ENCODE measurements at regions of chr12 and their contacts with region 1.

Region 1: DNA sequence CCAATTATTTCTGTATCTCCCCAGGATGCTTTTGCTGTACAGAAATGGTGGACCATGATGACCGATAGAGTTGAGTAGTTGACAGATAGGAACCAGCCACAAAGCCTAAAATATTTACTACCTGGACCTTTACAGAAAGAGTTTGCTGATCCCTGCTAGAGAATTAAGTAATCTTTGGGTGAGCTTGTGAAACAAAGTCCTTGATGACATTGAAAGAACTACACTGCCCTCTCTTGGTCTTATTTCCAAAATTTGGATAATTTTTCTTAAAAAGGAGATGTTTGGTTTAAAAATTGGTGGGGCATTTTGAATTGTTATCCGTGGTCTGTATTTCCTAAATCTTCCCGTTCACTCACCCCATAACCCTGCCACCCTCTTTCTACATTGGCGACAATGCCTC is 13.7 kb upstream of the TCTN1 start:
- DNase-seq: no peak
- H3K4me3 Mint-ChIP-seq: no peak overlapping the region
- H3K27ac Mint-ChIP-seq: no peak overlapping the region
- H3K4me1 Mint-ChIP-seq: peaks cover 13% of the 10 kb centered on the region
- H3K27me3 Mint-ChIP-seq: no peaks in the 10 kb centered on the region

Region 2: GRCh38 chr12:110367181-110367864 is 232.9 kb before region 1 on chr12:
- CTCF ChIA-PET with region 1: no interaction called
- POLR2A ChIA-PET with region 1: no interaction called
- DNase-seq: no peak
- H3K4me3 Mint-ChIP-seq: no peak overlapping the region
- H3K27ac Mint-ChIP-seq: no peak overlapping the region
- H3K4me1 Mint-ChIP-seq: no peaks in the 10 kb centered on the region
- H3K27me3 Mint-ChIP-seq: no peaks in the 10 kb centered on the region

Region 3: DNA sequence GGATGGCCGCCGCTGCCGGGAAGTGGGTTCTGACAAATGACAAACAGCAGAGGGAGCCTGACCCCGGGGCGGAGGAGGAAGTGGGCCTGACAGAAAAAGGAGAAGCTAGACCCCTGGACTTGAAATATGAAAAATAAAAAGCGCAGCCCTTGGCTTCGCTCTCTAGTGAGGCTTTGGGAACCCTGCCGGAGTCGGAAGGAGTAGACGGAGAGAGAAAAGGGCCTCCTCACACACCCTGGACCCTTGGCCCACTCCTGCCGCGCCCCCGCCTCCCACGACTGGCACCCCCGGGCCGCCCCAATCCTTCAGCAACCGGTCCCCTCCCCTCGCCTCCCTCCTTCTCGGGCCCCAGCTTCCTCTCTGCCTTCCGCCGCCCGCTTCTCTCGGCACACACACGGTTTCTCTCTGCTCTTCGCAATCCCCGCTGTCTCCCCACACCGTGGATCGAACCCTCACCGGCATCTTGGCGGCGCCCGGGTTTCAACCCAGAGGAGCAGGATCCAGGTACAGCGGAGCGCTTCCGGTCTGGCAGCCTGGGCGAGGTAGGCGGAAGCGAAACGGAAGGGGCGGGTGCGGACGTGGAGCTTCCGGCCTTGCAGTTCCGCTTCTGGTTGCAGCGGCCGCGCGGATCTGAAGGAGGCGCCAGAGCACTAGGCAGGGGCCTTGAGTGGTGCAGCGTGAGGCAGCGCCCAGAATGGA is 150.3 kb before region 1 on chr12 and contains the start of gene ARPC3:
- CTCF ChIA-PET with region 1: interaction called, 79 read pairs
- POLR2A ChIA-PET with region 1: interaction called, 44 read pairs
- DNase-seq: peak; percentile 97
- H3K4me3 Mint-ChIP-seq: peak within 1 kb of the TSS; percentile 99
- H3K27ac Mint-ChIP-seq: peak within 1 kb of the TSS; percentile 100
- H3K4me1 Mint-ChIP-seq: peaks cover 46% of the 10 kb centered on the region
- H3K27me3 Mint-ChIP-seq: no peaks in the 10 kb centered on the region
- total RNA-seq, gene ARPC3: 460 to 466 TPM

Region 4: DNA sequence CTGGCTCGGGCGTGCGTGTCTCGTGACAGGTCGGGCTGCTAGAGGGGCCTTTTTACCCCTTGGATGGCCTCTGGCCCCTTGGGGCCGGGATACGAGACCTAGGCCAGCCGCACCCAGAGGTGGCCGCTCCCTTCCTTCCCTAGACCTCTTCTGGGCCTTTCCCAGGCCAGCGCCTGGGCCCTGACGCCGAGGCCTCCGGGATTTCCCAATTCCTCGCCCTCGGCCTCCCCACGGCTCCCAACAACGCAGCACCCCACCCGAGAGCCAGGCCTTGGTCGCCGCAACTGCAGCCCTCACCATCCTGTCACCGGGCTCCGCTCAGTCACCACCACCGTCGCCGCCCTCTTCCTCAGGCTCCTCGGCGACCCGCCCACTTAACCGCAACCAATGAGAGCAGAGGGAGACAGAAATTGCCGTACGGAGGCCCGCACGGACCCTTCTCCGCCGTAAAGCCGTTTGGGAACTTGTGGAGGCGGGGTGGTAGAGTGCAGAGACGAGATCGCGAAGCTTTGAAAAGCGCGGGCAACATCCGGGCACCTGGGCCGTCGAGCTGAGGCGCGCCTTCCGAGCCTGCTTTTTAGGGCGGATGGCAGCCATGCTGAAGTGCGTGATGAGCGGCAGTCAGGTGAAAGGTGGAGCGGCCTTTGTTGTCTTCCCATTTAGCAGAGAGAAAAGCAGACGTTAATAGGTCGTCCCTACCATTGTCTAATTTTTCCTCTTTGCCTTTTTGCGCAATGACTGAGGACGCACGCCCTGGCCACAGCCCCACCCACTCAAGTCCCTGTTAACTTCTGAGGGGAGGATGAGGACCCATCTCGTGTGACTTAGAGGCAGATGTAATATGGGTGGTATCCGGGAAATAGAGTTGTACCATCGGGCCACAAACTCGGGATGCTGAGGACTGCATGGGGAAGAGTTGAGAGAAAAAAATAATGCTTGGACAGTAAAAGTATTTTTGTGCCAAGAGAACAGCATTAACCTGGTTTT is 98.2 kb before region 1 on chr12 and contains the starts of genes RAD9B and VPS29:
- CTCF ChIA-PET with region 1: interaction called, 51 read pairs
- POLR2A ChIA-PET with region 1: interaction called, 16 read pairs
- DNase-seq: peak; percentile 100
- H3K4me3 Mint-ChIP-seq: peak within 1 kb of the TSS; percentile 94
- H3K27ac Mint-ChIP-seq: peak within 1 kb of the TSS; percentile 93
- H3K4me1 Mint-ChIP-seq: peaks cover 40% of the 10 kb centered on the region
- H3K27me3 Mint-ChIP-seq: no peaks in the 10 kb centered on the region
- total RNA-seq, gene RAD9B: 1.1 to 2.0 TPM
- total RNA-seq, gene VPS29: 129 to 137 TPM

Region 5: GRCh38 chr12:110528277-110528839 is 71.9 kb before region 1 on chr12:
- CTCF ChIA-PET with region 1: interaction called, 24 read pairs
- POLR2A ChIA-PET with region 1: no interaction called
- DNase-seq: no peak
- H3K4me3 Mint-ChIP-seq: no peak overlapping the region
- H3K27ac Mint-ChIP-seq: no peak overlapping the region
- H3K4me1 Mint-ChIP-seq: peaks cover 17% of the 10 kb centered on the region
- H3K27me3 Mint-ChIP-seq: no peaks in the 10 kb centered on the region

Region 6: GRCh38 chr12:110546339-110546738 is 53.9 kb before region 1 on chr12:
- CTCF ChIA-PET with region 1: interaction called, 110 read pairs
- POLR2A ChIA-PET with region 1: interaction called, 15 read pairs
- DNase-seq: no peak
- H3K4me3 Mint-ChIP-seq: no peak overlapping the region
- H3K27ac Mint-ChIP-seq: no peak overlapping the region
- H3K4me1 Mint-ChIP-seq: peaks cover 39% of the 10 kb centered on the region
- H3K27me3 Mint-ChIP-seq: no peaks in the 10 kb centered on the region

Region 7: DNA sequence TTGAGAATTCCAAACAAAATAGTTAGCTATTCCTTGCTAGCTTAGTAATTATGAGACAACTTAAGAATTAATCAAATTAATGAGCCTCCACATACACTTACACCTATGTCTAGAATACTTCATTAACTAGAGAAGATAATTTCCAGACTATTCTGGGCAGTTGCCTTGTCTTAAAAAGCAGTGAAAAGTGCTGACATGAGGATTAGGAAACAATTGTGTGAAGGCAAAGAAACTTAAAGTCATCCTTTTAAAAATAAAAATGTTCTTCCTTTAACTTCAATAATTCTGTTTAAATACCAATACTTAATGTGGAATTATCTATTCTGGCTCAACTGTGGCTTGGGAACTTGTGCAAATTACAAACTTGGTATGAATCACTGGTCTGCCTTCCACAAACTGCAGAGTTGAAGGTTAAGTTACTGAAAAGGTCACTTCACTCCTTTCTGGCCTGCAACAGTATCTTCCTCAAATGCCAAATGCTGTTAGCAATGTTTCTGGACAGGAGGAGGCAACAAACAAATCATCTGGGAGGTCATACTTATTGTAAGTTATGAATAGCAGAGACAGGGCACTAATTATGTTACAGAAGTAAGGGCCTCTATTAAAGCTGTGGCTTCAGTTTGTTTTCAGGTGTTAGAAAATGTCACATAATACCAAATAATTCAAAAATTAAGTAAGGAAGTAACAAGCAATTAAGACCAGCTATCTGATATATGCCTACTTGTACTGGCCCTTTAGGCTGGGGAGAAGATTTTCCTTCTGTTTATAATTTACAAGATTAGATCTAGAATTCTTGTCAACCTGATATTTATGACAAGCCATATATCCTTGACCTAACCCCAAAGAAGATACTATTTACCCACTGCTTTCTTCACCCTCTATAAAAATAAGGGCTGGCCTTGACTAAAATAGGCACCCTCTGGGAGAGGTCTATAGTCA is 36.3 kb before region 1 on chr12:
- CTCF ChIA-PET with region 1: interaction called, 56 read pairs
- POLR2A ChIA-PET with region 1: interaction called, 4 read pairs
- DNase-seq: no peak
- H3K4me3 Mint-ChIP-seq: no peak overlapping the region
- H3K27ac Mint-ChIP-seq: peak overlapping the region; percentile 53
- H3K4me1 Mint-ChIP-seq: peaks cover 46% of the 10 kb centered on the region
- H3K27me3 Mint-ChIP-seq: no peaks in the 10 kb centered on the region

Region 8: GRCh38 chr12:110613771-110614684 is 13.8 kb after region 1 on chr12 and contains the start of gene TCTN1:
- CTCF ChIA-PET with region 1: interaction called, 33 read pairs
- POLR2A ChIA-PET with region 1: interaction called, 17 read pairs
- DNase-seq: peak; percentile 98
- H3K4me3 Mint-ChIP-seq: peak within 1 kb of the TSS; percentile 81
- H3K27ac Mint-ChIP-seq: peak within 1 kb of the TSS; percentile 79
- H3K4me1 Mint-ChIP-seq: peaks cover 14% of the 10 kb centered on the region
- H3K27me3 Mint-ChIP-seq: no peaks in the 10 kb centered on the region
- total RNA-seq, gene TCTN1: 2.6 to 3.4 TPM

Region 9: DNA sequence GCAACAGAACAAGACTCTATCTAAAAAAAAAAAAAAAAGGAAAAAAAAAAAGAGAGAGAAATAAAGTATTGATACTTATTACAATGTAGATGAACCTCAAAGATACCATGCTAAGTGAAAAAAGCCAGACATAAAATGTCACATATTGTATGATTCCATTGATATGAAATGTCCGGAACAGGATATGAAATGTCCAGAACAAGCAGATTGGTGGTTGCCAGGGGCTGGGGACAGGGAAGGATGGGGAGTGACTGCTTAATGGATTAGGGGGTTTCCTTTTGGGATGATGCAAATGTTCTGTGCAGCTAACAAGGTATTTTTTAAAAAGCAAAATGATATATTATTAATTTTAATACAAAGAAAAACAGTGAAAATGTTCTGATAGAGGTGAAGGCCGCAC is 83.6 kb after region 1 on chr12:
- CTCF ChIA-PET with region 1: no interaction called
- POLR2A ChIA-PET with region 1: no interaction called
- DNase-seq: no peak
- H3K4me3 Mint-ChIP-seq: no peak overlapping the region
- H3K27ac Mint-ChIP-seq: no peak overlapping the region
- H3K4me1 Mint-ChIP-seq: peaks cover 17% of the 10 kb centered on the region
- H3K27me3 Mint-ChIP-seq: peaks cover 8% of the 10 kb centered on the region

Region 10: DNA sequence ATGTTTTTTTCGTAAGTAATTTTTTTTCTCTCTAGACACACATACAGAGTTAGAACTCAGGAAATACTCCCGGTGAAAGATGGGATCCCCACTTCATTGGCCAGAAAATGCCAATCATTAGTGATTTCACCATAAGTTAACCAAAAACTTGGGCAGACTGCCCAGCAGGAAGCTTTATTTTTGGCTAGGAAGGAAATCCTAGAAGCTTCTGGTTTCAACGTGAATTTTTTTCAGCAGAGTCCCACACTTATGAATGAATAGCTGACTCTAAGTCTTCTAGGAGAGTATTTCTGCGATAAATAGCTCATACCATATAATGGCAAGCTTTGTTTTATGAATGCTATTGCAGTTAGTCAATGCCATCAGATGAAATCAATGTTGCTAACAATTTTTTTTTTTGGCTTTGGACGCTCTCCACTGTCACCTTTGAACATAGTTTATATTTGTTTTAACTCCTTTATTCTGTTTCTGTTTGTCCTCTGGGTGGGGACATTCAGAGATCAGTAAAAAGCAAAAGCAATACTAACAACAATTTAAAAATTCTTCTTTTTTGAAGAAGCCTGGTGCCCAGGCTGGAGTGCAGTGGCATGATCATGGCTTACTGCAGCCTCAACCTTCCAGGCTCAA is 132.9 kb after region 1 on chr12:
- CTCF ChIA-PET with region 1: no interaction called
- POLR2A ChIA-PET with region 1: no interaction called
- DNase-seq: no peak
- H3K4me3 Mint-ChIP-seq: no peak overlapping the region
- H3K27ac Mint-ChIP-seq: peak overlapping the region; percentile 51
- H3K4me1 Mint-ChIP-seq: peaks cover 87% of the 10 kb centered on the region
- H3K27me3 Mint-ChIP-seq: no peaks in the 10 kb centered on the region